ENCODE measurements at regions of chr9 and their contacts with region 1.

Region 1: GRCh38 chr9:90870621-90871326 is 69.2 kb downstream of the SYK start:
- DNase-seq: peak in 1 of 3 donors; percentile 60
- ATAC-seq: peak; percentile 51
- H3K4me3 ChIP-seq: no peak overlapping the region
- H3K4me1 ChIP-seq: no peaks in the 10 kb centered on the region
- CTCF ChIP-seq: peak; percentile 75

Region 2: GRCh38 chr9:90735952-90736351 is 134.8 kb before region 1 on chr9:
- intact Hi-C with region 1: no loop called
- DNase-seq: no peak
- ATAC-seq: no peak
- H3K4me3 ChIP-seq: no peak overlapping the region
- H3K4me1 ChIP-seq: no peaks in the 10 kb centered on the region
- CTCF ChIP-seq: no peak

Region 3: GRCh38 chr9:90773617-90774016 is 97.2 kb before region 1 on chr9:
- intact Hi-C with region 1: loop called in 1 of 2 experiments (anchors 10 kb)
- DNase-seq: peak in 1 of 3 donors; percentile 39
- ATAC-seq: peak; percentile 70
- H3K4me3 ChIP-seq: no peak overlapping the region
- H3K4me1 ChIP-seq: no peaks in the 10 kb centered on the region
- CTCF ChIP-seq: peak; percentile 10

Measured in mucosa of descending colon (tissue), 3 donors.